ENCODE measurements at regions of chr18 and their contacts with region 1.

Region 1: DNA sequence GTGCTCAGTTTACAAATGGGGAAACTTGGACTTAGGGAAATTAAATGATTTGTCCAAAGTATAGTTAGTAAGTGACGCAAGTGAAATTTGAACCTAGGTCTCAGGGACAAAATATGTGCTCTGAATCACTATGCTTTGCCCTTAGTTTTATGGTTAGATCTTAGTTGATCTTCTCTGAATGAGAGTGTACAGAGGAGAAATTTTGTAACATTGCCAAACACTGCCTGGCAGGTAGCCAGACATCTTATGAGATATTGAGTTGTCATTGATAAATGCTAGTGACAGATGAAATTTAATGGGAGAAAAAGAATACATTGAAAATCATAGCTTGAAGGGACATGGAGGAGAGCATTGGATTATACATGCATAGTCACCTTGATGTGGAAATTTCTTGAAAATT is 91.4 kb downstream of the GALNT1 start:
- DNase-seq: no peak
- ATAC-seq: no peak
- H3K4me3 ChIP-seq: no peak overlapping the region
- H3K27ac ChIP-seq: no peak overlapping the region
- H3K4me1 ChIP-seq: no peaks in the 10 kb centered on the region
- H3K27me3 ChIP-seq: no peaks in the 10 kb centered on the region
- CTCF ChIP-seq: no peak
- EP300 ChIP-seq: no peak
- POLR2A ChIP-seq: no peak
- RAD21 ChIP-seq: no peak

Region 2: GRCh38 chr18:35661483-35662146 is 11.3 kb before region 1 on chr18:
- CTCF ChIA-PET with region 1: no interaction called
- POLR2A ChIA-PET with region 1: no interaction called
- in situ Hi-C with region 1: no loop called
- intact Hi-C with region 1: loop called (anchors 1 kb)
- DNase-seq: no peak
- ATAC-seq: peak; percentile 63
- H3K4me3 ChIP-seq: no peak overlapping the region
- H3K27ac ChIP-seq: no peak overlapping the region
- H3K4me1 ChIP-seq: no peaks in the 10 kb centered on the region; a peak in 1 of 5 replicates
- H3K27me3 ChIP-seq: no peaks in the 10 kb centered on the region
- CTCF ChIP-seq: peak; percentile 10 to 53 (median 16); a peak in 3 of 6 replicates
- EP300 ChIP-seq: no peak
- POLR2A ChIP-seq: no peak
- RAD21 ChIP-seq: peak in 1 of 2 experiments; percentile 52; a peak in 2 of 4 replicates

Measured in K562 (cell line).